Activated B cell treated with CpG ODN at 0.5 μM for 24 hours (primary cell): ENCODE measurements at regions of chr7 and their contacts with region 1.

Region 1: GRCh38 chr7:30740424-30741181 is 11.3 kb upstream of the INMT start:
- DNase-seq: peak; percentile 53
- ATAC-seq: peak; percentile 57
- H3K4me3 Mint-ChIP-seq: no peak overlapping the region
- H3K27ac Mint-ChIP-seq: no peak overlapping the region
- H3K4me1 Mint-ChIP-seq: peaks cover 2% of the 10 kb centered on the region
- H3K27me3 Mint-ChIP-seq: peaks cover 4% of the 10 kb centered on the region
- CTCF ChIP-seq: peak; percentile 94

Region 2: GRCh38 chr7:30510124-30511075 is 230.2 kb before region 1 on chr7:
- CTCF ChIA-PET with region 1: no interaction called
- POLR2A ChIA-PET with region 1: no interaction called
- intact Hi-C with region 1: loop called (anchors 5 kb)
- DNase-seq: no peak
- ATAC-seq: peak; percentile 72
- H3K4me3 Mint-ChIP-seq: no peak overlapping the region
- H3K27ac Mint-ChIP-seq: no peak overlapping the region
- H3K4me1 Mint-ChIP-seq: peaks cover 5% of the 10 kb centered on the region
- H3K27me3 Mint-ChIP-seq: no peaks in the 10 kb centered on the region
- CTCF ChIP-seq: peak; percentile 42

Region 3: GRCh38 chr7:30548762-30549344 is 191.8 kb before region 1 on chr7:
- CTCF ChIA-PET with region 1: interaction called, 6 read pairs
- POLR2A ChIA-PET with region 1: no interaction called
- intact Hi-C with region 1: loop called (anchors 2 kb)
- DNase-seq: no peak
- ATAC-seq: peak; percentile 57
- H3K4me3 Mint-ChIP-seq: no peak overlapping the region
- H3K27ac Mint-ChIP-seq: no peak overlapping the region
- H3K4me1 Mint-ChIP-seq: peaks cover 10% of the 10 kb centered on the region
- H3K27me3 Mint-ChIP-seq: no peaks in the 10 kb centered on the region
- CTCF ChIP-seq: peak; percentile 47

Region 4: GRCh38 chr7:30635798-30636197 is 104.8 kb before region 1 on chr7:
- CTCF ChIA-PET with region 1: no interaction called
- POLR2A ChIA-PET with region 1: no interaction called
- intact Hi-C with region 1: no loop called
- DNase-seq: no peak
- ATAC-seq: no peak
- H3K4me3 Mint-ChIP-seq: no peak overlapping the region
- H3K27ac Mint-ChIP-seq: no peak overlapping the region
- H3K4me1 Mint-ChIP-seq: no peaks in the 10 kb centered on the region
- H3K27me3 Mint-ChIP-seq: no peaks in the 10 kb centered on the region
- CTCF ChIP-seq: no peak

Region 5: GRCh38 chr7:30702200-30702599 is 38.4 kb before region 1 on chr7:
- CTCF ChIA-PET with region 1: no interaction called
- POLR2A ChIA-PET with region 1: no interaction called
- intact Hi-C with region 1: loop called (anchors 1 kb)
- DNase-seq: no peak
- ATAC-seq: no peak
- H3K4me3 Mint-ChIP-seq: no peak overlapping the region
- H3K27ac Mint-ChIP-seq: no peak overlapping the region
- H3K4me1 Mint-ChIP-seq: no peaks in the 10 kb centered on the region
- H3K27me3 Mint-ChIP-seq: peaks cover 10% of the 10 kb centered on the region
- CTCF ChIP-seq: no peak

Region 6: DNA sequence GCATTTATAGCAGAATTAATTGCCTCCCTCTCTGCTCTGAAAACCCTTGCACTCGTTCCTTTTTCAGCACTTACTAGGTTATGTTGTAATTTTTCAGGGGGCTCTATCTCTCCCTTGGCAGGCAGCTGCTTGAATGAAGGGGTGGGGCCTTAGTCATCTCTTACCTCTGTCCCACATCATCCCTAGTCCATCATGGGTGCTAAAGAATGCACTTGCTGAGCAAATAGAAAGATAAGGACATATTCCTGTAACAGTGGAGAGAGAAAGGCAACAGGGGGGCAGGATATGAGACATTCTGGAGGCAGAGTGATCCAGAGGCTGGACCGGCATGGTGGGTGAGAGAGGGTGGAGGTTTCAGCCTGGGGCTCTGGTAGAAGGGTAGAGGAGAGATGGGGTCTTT is 90.6 kb after region 1 on chr7:
- CTCF ChIA-PET with region 1: no interaction called
- POLR2A ChIA-PET with region 1: no interaction called
- intact Hi-C with region 1: no loop called
- DNase-seq: no peak
- ATAC-seq: no peak
- H3K4me3 Mint-ChIP-seq: no peak overlapping the region
- H3K27ac Mint-ChIP-seq: no peak overlapping the region
- H3K4me1 Mint-ChIP-seq: no peaks in the 10 kb centered on the region
- H3K27me3 Mint-ChIP-seq: no peaks in the 10 kb centered on the region
- CTCF ChIP-seq: no peak

Region 7: GRCh38 chr7:31122649-31123058 is 382.1 kb after region 1 on chr7:
- CTCF ChIA-PET with region 1: no interaction called
- POLR2A ChIA-PET with region 1: interaction called, 11 read pairs
- intact Hi-C with region 1: no loop called
- DNase-seq: no peak
- ATAC-seq: no peak
- H3K4me3 Mint-ChIP-seq: no peak overlapping the region
- H3K27ac Mint-ChIP-seq: no peak overlapping the region
- H3K4me1 Mint-ChIP-seq: no peaks in the 10 kb centered on the region
- H3K27me3 Mint-ChIP-seq: peaks cover 3% of the 10 kb centered on the region
- CTCF ChIP-seq: no peak